SK-N-SH (cell line): ENCODE measurements at regions of chr5 and their contacts with region 1.

Region 1: GRCh38 chr5:153964880-153965645 is 73.6 kb downstream of the FAM114A2 start:
- DNase-seq: peak; percentile 77
- H3K4me3 ChIP-seq: peak overlapping the region in 1 of 2 experiments; percentile 41; a peak in 2 of 4 replicates
- H3K27ac ChIP-seq: no peak overlapping the region
- H3K4me1 ChIP-seq: peaks cover 0 to 7% of the 10 kb centered on the region in 2 experiments; a peak in 1 of 4 replicates
- H3K27me3 ChIP-seq: no peaks in the 10 kb centered on the region
- CTCF ChIP-seq: peak; percentile 96
- EP300 ChIP-seq: no peak
- RAD21 ChIP-seq: peak; percentile 99

Region 2: GRCh38 chr5:152560512-152561137 is 1404.4 kb before region 1 on chr5:
- CTCF ChIA-PET with region 1: interaction called, 24 read pairs
- POLR2A ChIA-PET with region 1: no interaction called
- DNase-seq: peak; percentile 36
- H3K4me3 ChIP-seq: no peak overlapping the region
- H3K27ac ChIP-seq: no peak overlapping the region
- H3K4me1 ChIP-seq: no peaks in the 10 kb centered on the region
- H3K27me3 ChIP-seq: no peaks in the 10 kb centered on the region
- CTCF ChIP-seq: peak; percentile 79
- EP300 ChIP-seq: no peak
- RAD21 ChIP-seq: peak; percentile 72

Region 3: DNA sequence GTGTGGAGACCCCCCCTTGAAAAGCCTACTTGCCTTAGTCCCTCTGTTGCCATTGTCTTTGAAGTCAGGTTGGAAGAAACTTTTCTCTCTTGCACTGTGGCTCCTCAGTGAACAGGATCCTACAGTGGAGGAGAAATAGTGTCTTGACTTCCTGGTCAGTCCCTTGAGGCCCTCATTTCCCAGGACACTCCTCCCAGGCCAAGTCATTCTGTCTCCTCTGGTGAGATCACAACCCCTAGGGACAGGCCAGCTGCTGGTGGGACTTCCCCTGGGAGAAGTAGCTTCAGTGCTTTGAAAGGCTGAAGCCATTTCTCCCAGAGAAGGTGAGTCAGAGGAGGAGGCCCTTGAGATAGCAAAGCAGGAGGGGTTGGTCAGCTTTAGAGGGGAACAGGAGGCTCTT is 484.7 kb before region 1 on chr5:
- CTCF ChIA-PET with region 1: interaction called, 11 read pairs
- POLR2A ChIA-PET with region 1: no interaction called
- DNase-seq: no peak
- H3K4me3 ChIP-seq: no peak overlapping the region
- H3K27ac ChIP-seq: no peak overlapping the region
- H3K4me1 ChIP-seq: peaks cover 0 to 1% of the 10 kb centered on the region in 2 experiments; a peak in 1 of 4 replicates
- H3K27me3 ChIP-seq: no peaks in the 10 kb centered on the region
- CTCF ChIP-seq: no peak
- EP300 ChIP-seq: no peak
- RAD21 ChIP-seq: no peak

Region 4: DNA sequence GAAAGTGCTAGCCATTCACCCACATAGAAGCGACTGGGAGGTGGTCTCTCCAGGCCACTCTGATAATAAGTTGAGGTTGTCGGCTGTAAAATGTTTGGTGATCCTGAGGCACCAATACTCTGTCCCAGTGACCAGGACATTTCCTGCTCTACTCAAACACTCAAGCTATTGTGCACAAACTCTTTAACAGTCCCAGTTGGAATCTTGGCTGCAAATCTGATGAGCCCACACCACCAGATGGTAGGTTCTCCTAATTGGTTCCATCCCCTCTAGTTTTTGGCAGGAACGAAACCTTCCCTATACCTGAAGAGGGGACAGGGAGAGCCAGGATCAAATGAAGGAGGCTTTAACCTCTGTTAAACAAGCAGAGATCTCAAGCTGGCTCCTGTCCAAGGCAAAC is 460.3 kb before region 1 on chr5:
- CTCF ChIA-PET with region 1: interaction called, 42 read pairs
- POLR2A ChIA-PET with region 1: no interaction called
- DNase-seq: no peak
- H3K4me3 ChIP-seq: no peak overlapping the region
- H3K27ac ChIP-seq: no peak overlapping the region
- H3K4me1 ChIP-seq: no peaks in the 10 kb centered on the region; a peak in 1 of 4 replicates
- H3K27me3 ChIP-seq: no peaks in the 10 kb centered on the region
- CTCF ChIP-seq: no peak
- EP300 ChIP-seq: no peak
- RAD21 ChIP-seq: no peak

Region 5: DNA sequence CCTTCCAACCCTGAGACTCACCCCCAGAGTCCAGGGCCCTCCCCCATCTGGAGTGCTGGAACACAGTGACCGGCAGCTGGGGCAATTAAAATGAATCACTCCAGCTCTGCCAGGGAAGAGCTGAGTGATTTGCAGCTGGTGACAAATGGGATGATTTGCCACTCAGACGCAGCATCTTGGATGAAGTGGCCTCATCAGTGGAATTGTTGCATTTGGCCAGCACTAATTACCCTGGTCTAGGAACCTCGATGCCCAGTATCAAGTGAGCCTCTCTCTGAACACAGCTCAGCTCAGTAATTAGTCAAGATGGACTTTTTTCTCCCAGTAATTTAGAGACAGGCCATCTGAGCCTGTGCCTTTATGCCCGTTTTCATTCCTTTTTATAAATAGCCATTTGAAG is 215.1 kb before region 1 on chr5:
- CTCF ChIA-PET with region 1: no interaction called
- POLR2A ChIA-PET with region 1: no interaction called
- DNase-seq: no peak
- H3K4me3 ChIP-seq: no peak overlapping the region
- H3K27ac ChIP-seq: no peak overlapping the region
- H3K4me1 ChIP-seq: peaks cover 0 to 21% of the 10 kb centered on the region in 2 experiments; a peak in 1 of 4 replicates
- H3K27me3 ChIP-seq: no peaks in the 10 kb centered on the region
- CTCF ChIP-seq: no peak
- EP300 ChIP-seq: no peak
- RAD21 ChIP-seq: no peak

Region 6: DNA sequence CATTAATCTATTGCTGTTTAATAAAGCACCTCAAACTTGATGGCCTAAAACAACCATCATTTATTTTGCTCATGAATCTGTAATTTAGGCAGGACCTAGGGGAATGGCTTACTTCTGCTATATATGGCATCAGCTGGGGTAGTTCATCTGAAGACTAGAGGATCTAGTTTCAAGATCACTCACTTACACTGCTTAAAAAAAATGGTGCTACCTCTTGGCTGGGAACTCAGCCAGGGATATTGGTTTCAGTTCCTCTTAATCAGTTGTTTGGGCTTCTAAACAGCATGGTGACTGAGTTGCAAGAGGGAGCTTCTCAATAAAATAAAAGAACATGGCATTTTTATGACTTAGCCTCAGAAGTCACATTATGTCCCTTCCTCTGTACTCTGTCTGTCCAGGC is 68.4 kb before region 1 on chr5:
- CTCF ChIA-PET with region 1: no interaction called
- POLR2A ChIA-PET with region 1: no interaction called
- DNase-seq: no peak
- H3K4me3 ChIP-seq: no peak overlapping the region
- H3K27ac ChIP-seq: no peak overlapping the region
- H3K4me1 ChIP-seq: peaks cover 0 to 7% of the 10 kb centered on the region in 2 experiments; a peak in 2 of 4 replicates
- H3K27me3 ChIP-seq: no peaks in the 10 kb centered on the region
- CTCF ChIP-seq: no peak
- EP300 ChIP-seq: no peak
- RAD21 ChIP-seq: no peak

Region 7: GRCh38 chr5:153981905-153982605 is 17.0 kb after region 1 on chr5:
- CTCF ChIA-PET with region 1: interaction called, 23 read pairs
- POLR2A ChIA-PET with region 1: no interaction called
- DNase-seq: no peak
- H3K4me3 ChIP-seq: no peak overlapping the region
- H3K27ac ChIP-seq: no peak overlapping the region
- H3K4me1 ChIP-seq: no peaks in the 10 kb centered on the region
- H3K27me3 ChIP-seq: no peaks in the 10 kb centered on the region
- CTCF ChIP-seq: no peak
- EP300 ChIP-seq: no peak
- RAD21 ChIP-seq: no peak

Region 8: GRCh38 chr5:154298065-154298464 is 333.0 kb after region 1 on chr5:
- CTCF ChIA-PET with region 1: no interaction called
- POLR2A ChIA-PET with region 1: no interaction called
- DNase-seq: no peak
- H3K4me3 ChIP-seq: no peak overlapping the region
- H3K27ac ChIP-seq: no peak overlapping the region
- H3K4me1 ChIP-seq: no peaks in the 10 kb centered on the region; a peak in 2 of 4 replicates
- H3K27me3 ChIP-seq: no peaks in the 10 kb centered on the region
- CTCF ChIP-seq: no peak
- EP300 ChIP-seq: no peak
- RAD21 ChIP-seq: no peak